Colonic mucosa (tissue), 4 donors: ENCODE measurements at regions of chr7 and their contacts with region 1.

Region 1: DNA sequence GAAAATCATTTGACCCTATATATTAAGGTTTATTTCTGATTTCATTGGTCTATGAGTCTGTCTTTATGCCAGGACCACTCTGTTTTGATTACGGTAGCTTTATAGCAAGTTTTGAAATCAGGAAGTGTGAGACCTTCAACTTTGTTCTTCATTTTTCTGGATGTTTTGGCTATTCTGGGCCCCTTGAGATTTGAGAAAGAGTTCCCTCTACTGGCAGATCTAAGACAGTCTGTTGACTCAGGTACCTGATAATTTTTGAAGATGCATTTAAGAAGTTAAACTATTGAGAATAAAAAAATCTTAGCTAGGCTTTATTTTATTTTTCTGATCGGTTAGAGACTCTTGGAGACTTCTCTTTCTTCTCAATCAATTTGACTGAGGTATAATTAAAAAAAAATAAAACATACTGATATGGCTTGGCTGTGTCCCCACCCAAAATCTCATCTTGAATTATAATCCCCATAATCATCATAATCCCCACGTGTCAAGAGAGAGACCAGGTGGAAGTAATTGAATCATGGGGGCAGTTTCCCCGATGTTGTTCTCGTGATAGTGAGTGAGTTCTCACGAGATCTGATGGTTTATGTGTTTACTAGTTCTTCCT is 209.2 kb downstream of the SNX10 start:
- DNase-seq: no peak
- H3K4me3 ChIP-seq: no peak overlapping the region
- H3K27ac ChIP-seq: no peak overlapping the region
- H3K4me1 ChIP-seq: no peaks in the 10 kb centered on the region
- H3K27me3 ChIP-seq: no peaks in the 10 kb centered on the region
- CTCF ChIP-seq: peak; percentile 44

Region 2: GRCh38 chr7:26178272-26178960 is 322.4 kb before region 1 on chr7:
- intact Hi-C with region 1: no loop called
- DNase-seq: no peak
- H3K4me3 ChIP-seq: no peak overlapping the region
- H3K27ac ChIP-seq: no peak overlapping the region
- H3K4me1 ChIP-seq: no peaks in the 10 kb centered on the region
- H3K27me3 ChIP-seq: no peaks in the 10 kb centered on the region
- CTCF ChIP-seq: no peak

Region 3: GRCh38 chr7:26667500-26668133 is 166.8 kb after region 1 on chr7:
- intact Hi-C with region 1: loop called (anchors 10 kb)
- DNase-seq: peak; percentile 81
- H3K4me3 ChIP-seq: no peak overlapping the region
- H3K27ac ChIP-seq: no peak overlapping the region
- H3K4me1 ChIP-seq: no peaks in the 10 kb centered on the region
- H3K27me3 ChIP-seq: no peaks in the 10 kb centered on the region
- CTCF ChIP-seq: peak; percentile 58